ENCODE measurements at regions of chr3 and their contacts with region 1.

Region 1: DNA sequence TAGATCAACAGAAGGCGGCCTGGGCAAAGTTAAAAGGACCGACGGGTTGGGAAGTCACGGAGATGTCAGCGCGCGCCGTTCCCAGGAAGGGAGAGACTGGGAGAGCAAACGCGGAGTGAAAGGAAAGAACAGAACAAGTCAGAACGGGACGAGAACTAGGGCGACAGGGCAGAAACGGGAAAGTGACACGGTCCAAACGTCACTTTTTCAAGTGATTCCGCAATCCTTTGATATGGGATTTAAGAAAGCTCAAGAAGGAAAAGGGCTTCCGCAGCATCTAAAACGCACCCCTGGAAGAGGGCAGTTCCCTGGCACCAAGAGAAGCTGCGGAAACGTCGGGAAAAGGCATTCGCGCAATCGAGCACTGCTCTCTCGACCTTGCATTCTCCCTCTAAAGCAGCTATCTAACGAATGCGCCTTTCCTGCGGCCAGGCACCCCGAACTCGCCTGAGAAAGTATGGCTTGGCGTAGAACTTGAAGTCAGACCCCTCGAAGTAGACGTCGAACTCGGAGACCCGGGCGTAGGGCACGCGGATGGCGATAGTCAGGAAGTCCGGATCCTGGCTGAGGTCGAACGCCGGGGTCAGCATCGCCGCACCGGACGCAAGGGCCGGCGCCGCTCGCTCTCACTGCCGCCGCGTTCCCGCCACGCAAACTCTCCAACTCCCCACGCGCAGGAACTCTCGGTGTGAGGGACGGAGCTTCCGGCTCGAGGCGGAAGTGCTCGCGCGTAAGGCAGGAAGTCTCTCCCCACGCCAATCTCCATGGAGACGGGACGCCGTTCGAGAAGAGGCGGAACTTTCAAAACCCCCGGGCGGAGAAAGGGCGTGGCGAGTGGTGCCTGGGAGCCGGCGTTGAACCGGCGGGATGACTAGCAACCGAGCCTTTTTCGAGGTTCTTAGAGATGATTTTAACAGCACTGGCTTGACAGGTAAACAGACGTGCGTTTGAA is at the start of gene SHQ1:
- DNase-seq: peak; percentile 98
- ATAC-seq: peak; percentile 90
- H3K4me3 Mint-ChIP-seq: peak within 1 kb of the TSS; percentile 99
- H3K27ac Mint-ChIP-seq: peak within 1 kb of the TSS; percentile 86
- H3K4me1 Mint-ChIP-seq: peaks cover 54% of the 10 kb centered on the region
- H3K27me3 Mint-ChIP-seq: peaks cover 1% of the 10 kb centered on the region
- total RNA-seq, gene SHQ1: 26.4 to 31.3 TPM

Region 2: DNA sequence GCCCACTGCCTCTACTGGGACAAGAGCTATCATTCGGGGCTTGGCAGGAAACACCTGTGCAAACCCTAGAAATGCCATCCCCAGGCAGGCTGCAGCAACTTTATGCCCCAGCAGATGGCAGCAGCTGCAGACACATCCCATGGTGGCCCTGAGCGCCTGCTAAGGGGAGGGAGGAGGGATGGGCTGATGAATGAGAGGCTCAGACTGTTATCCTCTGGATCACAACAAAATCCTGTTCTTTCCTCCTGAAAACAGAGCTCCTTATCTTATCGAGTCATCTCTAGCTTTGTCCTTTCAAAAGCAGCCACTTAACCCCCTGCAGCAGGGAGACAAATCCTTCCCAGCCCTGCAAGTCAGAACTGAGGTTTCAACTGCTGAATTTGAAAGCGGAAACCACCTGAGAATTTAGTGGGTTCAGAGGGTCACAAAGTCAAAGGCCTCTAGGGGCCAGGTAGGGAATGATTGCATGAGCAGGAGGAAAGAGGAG is 972.5 kb before region 1 on chr3:
- CTCF ChIA-PET with region 1: interaction called, 3 read pairs
- POLR2A ChIA-PET with region 1: interaction called, 3 read pairs
- intact Hi-C with region 1: loop called in 1 of 2 experiments (anchors 1 kb)
- DNase-seq: peak; percentile 90
- ATAC-seq: peak; percentile 90
- H3K4me3 Mint-ChIP-seq: no peak overlapping the region
- H3K27ac Mint-ChIP-seq: peak overlapping the region; percentile 89
- H3K4me1 Mint-ChIP-seq: peaks cover 35% of the 10 kb centered on the region
- H3K27me3 Mint-ChIP-seq: peaks cover 6% of the 10 kb centered on the region

Region 3: DNA sequence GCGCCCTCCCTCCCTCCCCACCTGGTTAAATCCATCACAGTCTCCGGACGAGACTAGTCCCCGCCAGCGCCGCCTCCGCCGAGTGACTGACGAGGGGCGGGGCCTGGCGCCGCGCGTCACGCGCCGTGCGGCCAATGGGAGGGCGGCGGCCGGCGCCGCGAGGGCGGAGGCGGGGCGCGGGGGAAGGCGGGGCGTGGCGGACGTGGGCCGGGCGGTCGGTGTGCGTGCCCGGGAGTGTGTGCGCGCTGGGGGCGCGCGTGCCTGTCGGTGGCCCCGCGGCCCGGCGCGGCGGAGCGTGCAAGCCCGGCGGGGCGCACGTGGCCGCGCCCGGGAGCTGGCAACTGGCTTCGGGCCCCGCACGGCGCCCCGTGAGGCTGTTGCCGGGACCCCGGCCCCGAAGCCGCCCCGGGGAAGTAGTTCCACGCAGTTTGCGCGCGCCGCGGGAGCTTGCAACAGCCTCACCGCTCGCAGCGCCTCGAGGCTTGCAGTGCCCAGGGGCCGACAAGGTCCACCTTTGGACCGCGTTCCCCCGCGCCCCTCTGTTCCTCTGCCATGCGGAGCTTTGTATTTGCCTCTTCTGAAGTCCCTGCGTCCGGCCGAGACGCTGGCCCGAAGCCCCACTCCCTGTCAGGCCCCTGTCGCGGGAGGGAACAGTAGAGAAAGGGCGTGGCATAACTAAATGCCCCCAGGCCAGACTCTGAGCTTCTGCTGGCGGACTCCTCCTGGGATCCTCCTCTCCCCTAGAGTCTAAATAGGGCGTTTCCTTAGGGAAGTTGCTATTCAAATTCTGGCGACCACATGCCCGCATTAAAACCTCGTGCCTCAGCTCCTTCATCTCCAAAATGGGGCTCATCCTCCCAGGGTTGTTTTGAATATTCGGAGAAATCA is 400.7 kb before region 1 on chr3:
- CTCF ChIA-PET with region 1: no interaction called
- POLR2A ChIA-PET with region 1: no interaction called
- intact Hi-C with region 1: loop called in 1 of 2 experiments (anchors 2 kb)
- DNase-seq: peak; percentile 96
- ATAC-seq: peak; percentile 87
- H3K4me3 Mint-ChIP-seq: peak overlapping the region; percentile 43
- H3K27ac Mint-ChIP-seq: peak overlapping the region; percentile 63
- H3K4me1 Mint-ChIP-seq: peaks cover 38% of the 10 kb centered on the region
- H3K27me3 Mint-ChIP-seq: peaks cover 13% of the 10 kb centered on the region

Region 4: GRCh38 chr3:72768006-72768441 is 80.0 kb before region 1 on chr3:
- CTCF ChIA-PET with region 1: no interaction called
- POLR2A ChIA-PET with region 1: no interaction called
- intact Hi-C with region 1: no loop called
- DNase-seq: no peak
- ATAC-seq: no peak
- H3K4me3 Mint-ChIP-seq: no peak overlapping the region
- H3K27ac Mint-ChIP-seq: no peak overlapping the region
- H3K4me1 Mint-ChIP-seq: peaks cover 14% of the 10 kb centered on the region
- H3K27me3 Mint-ChIP-seq: no peaks in the 10 kb centered on the region

Region 5: DNA sequence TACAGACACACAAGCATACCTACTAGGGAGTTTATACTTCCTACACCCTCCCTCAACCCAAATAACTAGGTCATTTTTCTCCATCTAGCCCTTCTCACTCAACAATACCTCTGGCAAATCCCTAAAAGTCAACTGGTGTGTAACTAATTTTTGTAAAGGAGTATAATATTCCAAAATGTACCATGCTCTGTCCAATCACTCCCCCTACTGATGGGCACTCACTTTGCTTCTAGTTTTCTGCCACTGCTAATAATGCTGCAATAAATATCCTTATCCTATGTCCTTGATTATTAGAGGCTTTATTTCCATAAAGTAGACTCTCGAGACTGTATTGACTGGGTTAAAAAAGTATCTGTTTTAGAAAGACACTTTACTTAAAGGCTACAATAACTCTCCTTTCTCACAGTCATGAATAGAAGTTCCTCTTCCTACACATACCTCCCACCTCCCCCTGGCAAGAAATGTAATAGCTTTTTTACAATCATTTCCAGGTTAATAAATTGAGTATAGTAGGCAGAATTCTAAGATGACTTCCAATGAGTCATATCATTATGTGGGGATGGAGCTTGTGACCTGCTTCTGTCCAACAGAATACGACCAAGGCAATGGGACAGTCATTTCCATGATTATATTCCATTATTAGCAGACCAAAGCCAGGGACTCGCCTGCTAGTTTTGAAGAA is 29.8 kb before region 1 on chr3:
- CTCF ChIA-PET with region 1: interaction called, 10 read pairs
- POLR2A ChIA-PET with region 1: interaction called, 5 read pairs
- intact Hi-C with region 1: no loop called
- DNase-seq: no peak
- ATAC-seq: no peak
- H3K4me3 Mint-ChIP-seq: no peak overlapping the region
- H3K27ac Mint-ChIP-seq: peak overlapping the region; percentile 38
- H3K4me1 Mint-ChIP-seq: peaks cover 25% of the 10 kb centered on the region
- H3K27me3 Mint-ChIP-seq: no peaks in the 10 kb centered on the region

Region 6: DNA sequence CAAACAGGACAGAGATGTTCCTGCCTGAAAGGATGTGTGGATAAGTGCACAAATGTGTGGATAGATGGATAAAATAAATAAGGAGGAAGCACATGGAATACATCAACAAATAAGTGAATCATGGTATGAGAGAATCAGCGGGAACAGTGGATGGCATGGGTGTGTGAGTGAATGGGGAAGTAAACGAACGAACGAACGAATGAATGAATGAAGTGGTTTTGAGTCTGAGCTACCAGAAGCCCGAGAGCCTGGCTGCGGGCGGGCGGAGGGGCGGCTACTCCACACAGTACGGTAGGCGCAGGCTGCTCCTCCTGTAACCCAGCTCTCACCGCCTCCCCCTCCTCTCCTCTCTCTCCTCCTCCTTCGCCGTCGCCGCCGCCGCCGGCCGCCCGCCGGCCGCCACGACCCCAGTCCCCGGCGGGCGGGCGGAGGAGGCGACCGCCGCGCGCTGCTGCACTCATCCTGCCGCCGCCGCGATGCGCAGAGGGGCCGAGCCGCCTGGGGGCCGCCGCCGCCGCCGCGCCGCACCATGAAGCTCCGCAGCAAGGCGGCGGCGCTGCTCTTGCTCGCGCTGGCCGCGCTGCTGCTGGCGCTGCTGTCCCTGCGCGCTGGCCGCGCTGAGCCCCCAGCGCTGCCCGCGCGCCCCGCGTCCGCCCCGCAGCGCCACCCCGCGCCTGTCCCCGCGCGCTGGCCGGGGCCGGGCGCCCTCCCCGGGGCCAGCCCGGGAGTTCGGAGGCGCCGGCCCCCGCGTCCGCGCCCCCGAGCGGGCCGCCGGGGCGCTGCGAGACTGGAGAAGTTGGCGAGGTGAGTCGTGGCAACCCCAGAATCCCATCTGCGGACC is 39.9 kb after region 1 on chr3 and contains the start of gene GXYLT2:
- CTCF ChIA-PET with region 1: interaction called, 10 read pairs
- POLR2A ChIA-PET with region 1: no interaction called
- intact Hi-C with region 1: loop called in 1 of 2 experiments (anchors 2 kb)
- DNase-seq: peak; percentile 62
- ATAC-seq: peak; percentile 86
- H3K4me3 Mint-ChIP-seq: peak within 1 kb of the TSS; percentile 74
- H3K27ac Mint-ChIP-seq: no peak within 1 kb of the TSS
- H3K4me1 Mint-ChIP-seq: peaks cover 7% of the 10 kb centered on the region
- H3K27me3 Mint-ChIP-seq: peaks cover 73% of the 10 kb centered on the region
- total RNA-seq, gene GXYLT2: 0.07 TPM in 1 of 2 experiments, not detected in the other

Region 7: DNA sequence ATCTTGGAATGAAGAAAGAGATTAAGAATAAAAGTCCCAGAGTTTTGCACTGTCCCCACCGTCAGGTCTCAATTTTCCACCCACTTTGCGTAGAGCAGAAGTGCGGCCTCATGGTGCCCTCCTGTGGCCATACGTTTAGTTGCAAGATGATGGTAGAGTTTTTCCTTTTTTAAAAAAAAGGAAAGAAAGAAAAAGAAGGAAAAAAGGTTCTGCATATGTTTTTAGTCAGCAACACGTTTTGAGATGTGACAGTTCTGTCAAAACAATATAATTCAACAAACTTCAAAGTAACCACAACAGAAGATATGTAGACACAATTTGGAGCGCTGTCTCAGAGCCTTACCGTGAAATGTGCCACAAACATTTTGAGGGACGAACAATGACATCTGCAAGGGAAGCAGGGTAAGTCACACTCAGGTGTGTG is 238.1 kb after region 1 on chr3:
- CTCF ChIA-PET with region 1: interaction called, 50 read pairs
- POLR2A ChIA-PET with region 1: no interaction called
- intact Hi-C with region 1: loop called (anchors 1 kb)
- DNase-seq: peak; percentile 70
- ATAC-seq: peak; percentile 72
- H3K4me3 Mint-ChIP-seq: no peak overlapping the region
- H3K27ac Mint-ChIP-seq: no peak overlapping the region
- H3K4me1 Mint-ChIP-seq: peaks cover 8% of the 10 kb centered on the region
- H3K27me3 Mint-ChIP-seq: no peaks in the 10 kb centered on the region